IMR-90 (cell line): ENCODE measurements at regions of chr19 and their contacts with region 1.

Region 1: DNA sequence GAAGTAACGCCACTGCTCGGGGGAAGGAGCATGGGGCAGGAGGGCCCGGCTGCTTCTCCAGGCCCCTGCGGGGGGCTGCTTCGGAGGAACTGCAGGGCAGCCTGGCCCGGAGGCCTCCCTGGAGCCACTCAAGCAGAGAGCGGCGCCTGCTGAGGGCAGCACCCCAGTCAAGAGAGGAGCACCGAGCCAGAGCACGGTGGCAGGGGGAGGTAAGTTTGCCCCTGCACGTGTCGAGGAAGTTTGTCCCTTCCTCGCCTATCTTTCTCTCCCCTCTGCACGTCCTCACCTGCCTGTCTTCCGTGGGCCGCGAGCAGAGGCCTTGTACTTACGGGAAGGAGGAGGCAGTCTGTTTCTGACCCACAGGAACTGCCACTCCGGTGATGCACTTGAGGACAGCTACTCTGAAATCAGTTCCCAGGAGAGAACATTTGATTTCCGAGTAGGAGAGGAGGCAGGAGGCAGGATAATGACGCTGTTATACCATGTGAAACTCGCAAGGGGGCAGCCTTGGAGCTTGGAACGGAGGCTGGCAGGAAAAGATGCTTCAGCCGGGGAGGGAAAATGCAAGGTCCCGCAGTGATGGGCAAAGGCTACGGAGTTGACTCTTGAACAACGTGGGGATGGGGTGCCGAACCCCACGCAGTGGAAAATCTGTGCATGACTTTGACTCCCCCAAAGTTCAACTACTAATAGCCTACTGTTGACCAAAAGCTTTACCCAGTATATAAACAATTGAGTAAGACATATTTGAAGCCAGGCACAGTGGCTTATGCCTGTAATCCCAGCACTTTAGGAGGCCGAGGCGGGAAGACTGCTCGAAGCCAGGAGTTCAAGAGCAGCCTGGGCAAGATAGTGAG is 5.0 kb downstream of the FFAR1 start:
- DNase-seq: peak; percentile 64
- ATAC-seq: peak; percentile 98
- H3K4me3 ChIP-seq: no peak overlapping the region
- H3K27ac ChIP-seq: no peak overlapping the region
- H3K4me1 ChIP-seq: no peaks in the 10 kb centered on the region
- H3K27me3 ChIP-seq: peaks cover 12% of the 10 kb centered on the region
- CTCF ChIP-seq: peak; percentile 88
- POLR2A ChIP-seq: no peak
- RAD21 ChIP-seq: peak; percentile 90

Region 2: GRCh38 chr19:35468637-35469036 is 116.0 kb after region 1 on chr19:
- CTCF ChIA-PET with region 1: interaction called, 6 read pairs
- POLR2A ChIA-PET with region 1: no interaction called
- dilution Hi-C with region 1: no loop called
- in situ Hi-C with region 1: no loop called
- intact Hi-C with region 1: loop called (anchors 10 kb)
- DNase-seq: no peak
- ATAC-seq: peak; percentile 59; the same call in 1 of the 2 replicates
- H3K4me3 ChIP-seq: no peak overlapping the region
- H3K27ac ChIP-seq: no peak overlapping the region
- H3K4me1 ChIP-seq: no peaks in the 10 kb centered on the region
- H3K27me3 ChIP-seq: peaks cover 3% of the 10 kb centered on the region
- CTCF ChIP-seq: peak; percentile 39
- POLR2A ChIP-seq: no peak
- RAD21 ChIP-seq: peak; percentile 42; the same call in 1 of the 2 replicates

Region 3: GRCh38 chr19:35490364-35490763 is 137.7 kb after region 1 on chr19 and contains the start of gene KRTDAP:
- CTCF ChIA-PET with region 1: interaction called, 14 read pairs
- POLR2A ChIA-PET with region 1: no interaction called
- dilution Hi-C with region 1: no loop called
- in situ Hi-C with region 1: no loop called
- intact Hi-C with region 1: loop called (anchors 1 kb)
- DNase-seq: no peak
- ATAC-seq: no peak
- H3K4me3 ChIP-seq: no peak within 1 kb of the TSS
- H3K27ac ChIP-seq: no peak within 1 kb of the TSS
- H3K4me1 ChIP-seq: no peaks in the 10 kb centered on the region
- H3K27me3 ChIP-seq: peaks cover 44% of the 10 kb centered on the region
- CTCF ChIP-seq: no peak
- POLR2A ChIP-seq: no peak
- RAD21 ChIP-seq: no peak
- total RNA-seq, gene KRTDAP: not detected in 2 replicates

Region 4: DNA sequence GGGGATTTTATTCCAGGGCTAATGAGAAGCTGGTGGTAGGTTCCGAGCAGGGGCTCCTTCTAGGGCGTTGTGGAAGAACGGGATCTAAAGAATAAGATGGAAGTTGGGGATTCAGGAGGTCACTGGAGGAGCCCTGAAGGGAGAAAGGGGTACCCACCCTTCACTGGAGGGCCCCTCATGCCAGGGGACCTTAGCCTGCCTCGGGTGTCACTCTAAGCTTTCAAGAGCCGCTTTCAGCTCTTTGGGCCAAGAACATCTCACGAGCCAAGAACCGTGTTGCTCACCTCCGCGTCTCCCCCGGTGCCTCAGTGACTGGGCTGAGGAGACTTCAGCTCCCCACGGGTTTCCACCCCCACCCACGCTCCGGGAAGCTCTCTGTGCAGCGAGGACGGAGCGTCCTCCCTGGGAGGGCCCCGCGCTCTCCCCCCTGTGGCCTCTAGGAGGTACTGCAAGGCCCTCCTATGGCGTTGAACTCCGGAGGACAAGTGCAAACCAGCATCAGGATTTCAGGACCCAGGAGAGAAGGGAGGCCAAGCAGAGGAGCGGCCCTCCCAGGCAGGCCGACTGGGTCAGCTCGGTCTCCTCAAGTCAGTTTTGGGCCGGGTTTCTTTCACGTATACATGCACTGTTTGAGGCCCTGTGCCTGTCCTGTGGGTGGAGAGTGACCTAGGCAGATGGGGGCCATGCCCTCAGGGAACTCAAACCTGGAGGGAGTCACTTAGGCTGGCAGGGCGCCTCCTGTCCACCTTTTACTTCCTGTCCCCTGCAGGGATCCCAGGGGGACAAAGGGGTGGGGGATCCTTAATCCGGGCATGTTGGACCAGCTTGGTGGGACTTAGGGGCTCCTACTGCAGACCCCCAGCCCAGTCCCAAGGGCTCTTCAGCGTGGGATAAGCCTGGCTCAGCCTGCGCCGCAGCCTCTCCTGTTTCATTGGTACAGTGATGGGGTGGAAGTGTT is 142.7 kb after region 1 on chr19:
- CTCF ChIA-PET with region 1: interaction called, 14 read pairs
- POLR2A ChIA-PET with region 1: no interaction called
- dilution Hi-C with region 1: no loop called
- in situ Hi-C with region 1: no loop called
- intact Hi-C with region 1: loop called (anchors 1 kb)
- DNase-seq: peak; percentile 55
- ATAC-seq: peak; percentile 100
- H3K4me3 ChIP-seq: no peak overlapping the region
- H3K27ac ChIP-seq: no peak overlapping the region
- H3K4me1 ChIP-seq: no peaks in the 10 kb centered on the region
- H3K27me3 ChIP-seq: peaks cover 36% of the 10 kb centered on the region
- CTCF ChIP-seq: peak; percentile 88
- POLR2A ChIP-seq: no peak
- RAD21 ChIP-seq: peak; percentile 70

Region 5: GRCh38 chr19:35506011-35506410 is 153.3 kb after region 1 on chr19:
- CTCF ChIA-PET with region 1: no interaction called
- POLR2A ChIA-PET with region 1: no interaction called
- dilution Hi-C with region 1: no loop called
- in situ Hi-C with region 1: no loop called
- intact Hi-C with region 1: no loop called
- DNase-seq: no peak
- ATAC-seq: no peak
- H3K4me3 ChIP-seq: no peak overlapping the region
- H3K27ac ChIP-seq: no peak overlapping the region
- H3K4me1 ChIP-seq: no peaks in the 10 kb centered on the region; the same call in 1 of the 2 replicates
- H3K27me3 ChIP-seq: peaks cover 68% of the 10 kb centered on the region
- CTCF ChIP-seq: no peak
- POLR2A ChIP-seq: no peak
- RAD21 ChIP-seq: no peak

Region 6: DNA sequence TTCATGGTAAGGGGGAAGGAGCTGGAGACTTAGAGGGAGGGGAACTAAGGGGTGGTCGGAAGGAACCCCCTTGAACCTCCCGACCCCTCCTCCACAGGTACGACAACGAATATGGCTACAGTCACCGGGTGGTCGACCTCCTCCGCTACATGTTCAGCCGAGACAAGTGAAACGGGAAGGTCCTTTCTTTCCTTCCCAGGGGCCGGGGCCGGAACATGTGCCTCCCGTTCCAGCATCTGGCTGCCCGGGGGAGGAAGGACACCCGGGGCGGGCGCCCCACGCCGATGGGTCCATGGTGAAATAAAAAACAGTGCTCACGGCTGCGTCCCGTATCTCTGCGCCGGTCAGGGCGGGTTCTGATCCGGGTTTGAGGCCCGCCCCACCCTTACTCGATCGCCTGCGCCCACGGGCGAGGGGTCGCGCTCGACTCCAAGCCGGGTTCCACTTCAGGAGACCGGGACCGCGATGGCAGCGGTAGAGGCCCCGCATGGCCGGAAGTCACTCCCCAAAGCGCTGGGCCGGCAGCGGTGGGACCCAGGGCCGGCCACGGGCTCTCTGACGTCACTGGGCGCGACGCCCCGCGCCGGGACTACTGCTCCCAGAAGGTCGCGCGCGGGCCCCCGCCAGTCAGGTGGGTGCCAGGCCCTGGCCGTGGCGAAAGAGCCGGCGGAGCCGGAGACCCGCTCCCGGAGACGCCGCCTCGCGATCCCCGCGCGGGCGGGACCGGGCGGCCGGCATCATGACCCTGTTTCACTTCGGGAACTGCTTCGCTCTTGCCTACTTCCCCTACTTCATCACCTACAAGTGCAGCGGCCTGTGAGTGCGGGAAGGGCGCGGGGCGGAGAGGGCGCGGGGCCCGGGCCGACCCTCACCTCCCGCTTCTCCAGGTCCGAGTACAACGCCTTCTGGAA is 192.6 kb after region 1 on chr19 and contains the start of gene TMEM147:
- CTCF ChIA-PET with region 1: no interaction called
- POLR2A ChIA-PET with region 1: no interaction called
- dilution Hi-C with region 1: no loop called
- in situ Hi-C with region 1: no loop called
- intact Hi-C with region 1: loop called (anchors 1 kb)
- DNase-seq: peak; percentile 85
- ATAC-seq: peak; percentile 96
- H3K4me3 ChIP-seq: peak within 1 kb of the TSS; percentile 91
- H3K27ac ChIP-seq: peak within 1 kb of the TSS; percentile 90
- H3K4me1 ChIP-seq: peaks cover 8% of the 10 kb centered on the region
- H3K27me3 ChIP-seq: no peaks in the 10 kb centered on the region
- CTCF ChIP-seq: no peak
- POLR2A ChIP-seq: peak; percentile 90
- RAD21 ChIP-seq: no peak
- total RNA-seq, gene TMEM147: 59.2 and 67.6 TPM in 2 replicates

Region 7: DNA sequence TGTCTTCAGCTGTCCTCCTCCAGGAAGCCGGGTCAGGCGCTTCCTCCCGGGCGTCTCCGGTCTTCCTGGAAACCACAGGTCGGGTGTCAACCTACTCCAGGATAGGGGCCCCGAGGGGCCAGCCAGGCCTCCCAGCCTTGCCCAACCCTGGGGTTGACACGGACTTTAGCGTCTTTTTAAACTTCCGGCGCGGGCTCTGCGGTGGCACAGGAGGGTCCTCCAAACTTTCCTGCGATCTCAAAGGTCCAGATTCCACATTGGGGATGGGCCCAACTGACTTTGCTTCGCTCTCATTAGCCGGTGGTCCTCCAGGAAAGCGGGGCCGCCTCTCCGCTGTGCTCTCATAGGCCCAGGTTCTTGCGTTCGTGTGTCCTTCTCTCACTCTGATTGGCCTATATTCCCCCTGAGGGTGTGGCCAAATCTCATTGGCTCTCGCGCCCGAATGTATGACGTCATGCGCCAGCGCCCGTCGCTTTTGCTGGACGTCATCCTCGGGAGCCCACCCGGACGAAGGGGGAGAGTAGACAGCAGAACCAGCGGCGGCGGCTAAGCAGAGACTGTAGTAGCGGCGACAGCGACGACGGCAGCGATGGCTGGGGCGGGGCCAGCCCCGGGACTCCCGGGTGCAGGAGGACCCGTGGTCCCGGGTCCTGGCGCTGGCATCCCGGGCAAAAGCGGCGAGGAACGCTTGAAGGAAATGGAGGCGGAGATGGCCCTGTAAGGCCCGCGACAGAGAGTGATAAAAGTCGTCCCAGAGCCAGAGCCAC is 276.1 kb after region 1 on chr19 and contains the start of gene RBM42:
- CTCF ChIA-PET with region 1: no interaction called
- POLR2A ChIA-PET with region 1: no interaction called
- dilution Hi-C with region 1: no loop called
- in situ Hi-C with region 1: no loop called
- intact Hi-C with region 1: loop called (anchors 2 kb)
- DNase-seq: peak; percentile 99
- ATAC-seq: peak; percentile 100
- H3K4me3 ChIP-seq: peak within 1 kb of the TSS; percentile 65
- H3K27ac ChIP-seq: peak within 1 kb of the TSS; percentile 66
- H3K4me1 ChIP-seq: peaks cover 2% of the 10 kb centered on the region; the same call in 1 of the 2 replicates
- H3K27me3 ChIP-seq: no peaks in the 10 kb centered on the region
- CTCF ChIP-seq: no peak
- POLR2A ChIP-seq: peak; percentile 80; the same call in 1 of the 2 replicates
- RAD21 ChIP-seq: no peak
- total RNA-seq, gene RBM42: 19.0 and 20.6 TPM in 2 replicates